CD4-positive, alpha-beta memory T cell (primary cell): ENCODE measurements at regions of chr2 and their contacts with region 1.

Region 1: GRCh38 chr2:181223234-181223633 is 234.0 kb upstream of the ITGA4 start:
- DNase-seq: peak in 4 of 5 donors; percentile 35 to 63 (median 48)
- H3K4me3 ChIP-seq: no peak overlapping the region
- H3K4me3 Mint-ChIP-seq: peak overlapping the region in 7 of 8 donors; percentile 53 to 86 (median 65)
- H3K27ac ChIP-seq: peak overlapping the region; percentile 61
- H3K27ac Mint-ChIP-seq: peak overlapping the region; percentile 88 to 99 (median 94)
- H3K4me1 ChIP-seq: peaks cover 37% of the 10 kb centered on the region
- H3K4me1 Mint-ChIP-seq: peaks cover 22 to 40% (median 29%) of the 10 kb centered on the region in 4 donors
- H3K27me3 ChIP-seq: no peaks in the 10 kb centered on the region
- H3K27me3 Mint-ChIP-seq: no peaks in the 10 kb centered on the region

Region 2: DNA sequence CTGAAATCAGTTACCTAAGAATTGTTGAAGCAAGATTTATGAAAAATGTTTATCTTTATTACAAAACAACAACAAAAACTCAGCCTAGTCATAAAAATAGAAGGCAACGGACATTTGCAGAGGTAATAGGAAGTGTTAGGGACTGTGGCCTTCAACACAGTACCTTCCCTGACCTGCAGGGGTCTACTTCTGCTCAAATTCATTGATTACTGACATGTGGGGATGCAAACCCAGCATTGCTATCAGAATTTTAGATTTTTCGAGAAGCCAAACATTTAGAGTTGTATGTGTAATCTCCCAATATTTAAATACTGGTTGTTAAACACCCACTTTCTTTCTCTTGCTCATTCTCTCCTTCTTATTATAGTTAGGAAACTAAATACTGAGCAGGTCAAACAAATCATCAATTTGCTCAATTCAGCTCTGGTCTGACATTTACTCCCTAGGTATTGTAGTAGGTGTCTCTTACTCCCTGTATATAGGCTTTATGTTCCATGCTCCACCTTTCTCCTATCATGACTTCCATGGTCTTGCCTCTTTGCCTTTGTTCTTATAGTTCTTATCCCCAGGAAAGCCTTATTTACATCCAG is 44.3 kb before region 1 on chr2:
- CTCF ChIA-PET with region 1: interaction called, 5 read pairs
- POLR2A ChIA-PET with region 1: interaction called, 3 read pairs
- intact Hi-C with region 1: loop called (anchors 5 kb)
- DNase-seq: peak in 4 of 5 donors; percentile 29 to 43 (median 37)
- H3K4me3 ChIP-seq: no peak overlapping the region
- H3K4me3 Mint-ChIP-seq: peak overlapping the region in 4 of 8 donors; percentile 19 to 41 (median 34)
- H3K27ac ChIP-seq: peak overlapping the region; percentile 1
- H3K27ac Mint-ChIP-seq: peak overlapping the region; percentile 12 to 90 (median 54)
- H3K4me1 ChIP-seq: peaks cover 52% of the 10 kb centered on the region
- H3K4me1 Mint-ChIP-seq: peaks cover 31 to 39% (median 36%) of the 10 kb centered on the region in 4 donors
- H3K27me3 ChIP-seq: no peaks in the 10 kb centered on the region
- H3K27me3 Mint-ChIP-seq: no peaks in the 10 kb centered on the region

Region 3: DNA sequence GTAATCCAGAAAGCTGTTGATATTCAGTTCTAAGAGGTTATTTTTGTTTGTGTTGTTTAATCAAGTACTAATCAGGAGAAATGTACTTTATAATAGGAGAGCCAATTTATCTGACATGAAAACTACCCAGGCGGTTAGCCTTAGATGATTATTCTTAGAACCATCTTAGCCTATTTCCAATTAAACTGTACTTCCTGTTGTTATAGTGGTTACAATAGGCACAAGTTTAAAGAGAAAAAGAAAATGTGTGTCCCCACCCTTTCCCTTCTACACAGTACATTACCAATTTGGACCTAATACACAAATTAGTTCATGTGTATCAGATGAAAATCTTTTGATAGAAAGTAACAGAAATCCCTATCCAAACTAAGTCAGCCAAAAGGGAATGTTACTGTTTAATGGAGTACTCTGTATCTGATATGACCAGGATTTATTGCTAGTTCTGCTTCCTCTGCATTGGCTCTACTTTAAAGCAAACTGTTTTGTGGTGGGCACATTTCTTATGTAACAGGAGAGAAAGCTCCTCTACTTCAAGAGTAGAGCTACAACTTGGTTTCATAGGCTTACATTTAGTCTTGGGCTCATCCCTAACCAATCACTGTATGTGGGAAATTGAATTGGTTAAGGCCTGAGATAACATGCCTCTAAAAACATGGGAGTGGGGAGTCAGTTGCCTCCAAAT is 24.9 kb before region 1 on chr2:
- CTCF ChIA-PET with region 1: no interaction called
- POLR2A ChIA-PET with region 1: interaction called, 14 read pairs
- intact Hi-C with region 1: loop called (anchors 2 kb)
- DNase-seq: peak in 4 of 5 donors; percentile 18 to 39 (median 30)
- H3K4me3 ChIP-seq: no peak overlapping the region
- H3K4me3 Mint-ChIP-seq: peak overlapping the region; percentile 33 to 74 (median 66)
- H3K27ac ChIP-seq: peak overlapping the region; percentile 1
- H3K27ac Mint-ChIP-seq: peak overlapping the region; percentile 67 to 93 (median 88)
- H3K4me1 ChIP-seq: peaks cover 48% of the 10 kb centered on the region
- H3K4me1 Mint-ChIP-seq: peaks cover 40 to 56% (median 44%) of the 10 kb centered on the region in 4 donors
- H3K27me3 ChIP-seq: no peaks in the 10 kb centered on the region
- H3K27me3 Mint-ChIP-seq: no peaks in the 10 kb centered on the region

Region 4: DNA sequence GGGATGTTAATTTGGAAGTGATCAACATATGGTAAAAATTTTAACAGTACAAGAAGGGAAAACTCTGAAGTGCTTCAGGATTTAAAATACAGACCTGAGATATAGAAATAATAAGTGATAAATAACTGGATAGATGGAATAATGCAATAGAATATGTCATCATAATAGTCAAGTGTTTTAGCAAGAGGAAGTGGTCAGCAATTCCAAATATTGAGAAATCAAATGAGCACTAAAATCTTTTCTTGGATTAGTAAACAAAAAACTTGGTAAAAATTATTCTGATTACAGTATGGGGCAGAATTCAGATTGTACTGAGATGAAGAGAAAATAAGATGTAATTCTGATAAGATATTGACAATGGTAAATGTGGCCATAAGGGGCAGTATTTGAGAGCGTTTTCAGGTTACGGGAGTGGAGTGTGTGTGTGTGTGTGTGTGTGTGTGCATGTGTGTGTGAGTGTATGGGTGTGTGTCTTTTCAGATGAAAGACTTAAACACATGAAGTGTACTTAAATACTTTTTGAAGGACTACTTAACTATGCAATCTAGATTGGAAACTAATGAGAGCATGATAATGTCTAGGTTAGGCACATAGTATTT is 16.1 kb after region 1 on chr2:
- CTCF ChIA-PET with region 1: interaction called, 6 read pairs
- POLR2A ChIA-PET with region 1: interaction called, 7 read pairs
- intact Hi-C with region 1: loop called (anchors 2 kb)
- DNase-seq: peak in 2 of 5 donors; percentile 24 to 27
- H3K4me3 ChIP-seq: no peak overlapping the region
- H3K4me3 Mint-ChIP-seq: peak overlapping the region in 5 of 8 donors; percentile 2 to 36 (median 3)
- H3K27ac ChIP-seq: no peak overlapping the region
- H3K27ac Mint-ChIP-seq: peak overlapping the region in 5 of 7 donors; percentile 1 to 78 (median 10)
- H3K4me1 ChIP-seq: peaks cover 43% of the 10 kb centered on the region
- H3K4me1 Mint-ChIP-seq: peaks cover 38 to 47% (median 46%) of the 10 kb centered on the region in 4 donors
- H3K27me3 ChIP-seq: no peaks in the 10 kb centered on the region
- H3K27me3 Mint-ChIP-seq: no peaks in the 10 kb centered on the region